Heart right ventricle (tissue), 16 donors: ENCODE measurements at regions of chr1 and their contacts with region 1.

Region 1: GRCh38 chr1:220032911-220033310 is 13.4 kb downstream of the EPRS1 start:
- DNase-seq: no peak
- ATAC-seq: no peak
- H3K4me3 ChIP-seq: no peak overlapping the region
- H3K27ac ChIP-seq: no peak overlapping the region
- H3K4me1 ChIP-seq: no peaks in the 10 kb centered on the region
- H3K27me3 ChIP-seq: no peaks in the 10 kb centered on the region
- CTCF ChIP-seq: no peak

Region 2: DNA sequence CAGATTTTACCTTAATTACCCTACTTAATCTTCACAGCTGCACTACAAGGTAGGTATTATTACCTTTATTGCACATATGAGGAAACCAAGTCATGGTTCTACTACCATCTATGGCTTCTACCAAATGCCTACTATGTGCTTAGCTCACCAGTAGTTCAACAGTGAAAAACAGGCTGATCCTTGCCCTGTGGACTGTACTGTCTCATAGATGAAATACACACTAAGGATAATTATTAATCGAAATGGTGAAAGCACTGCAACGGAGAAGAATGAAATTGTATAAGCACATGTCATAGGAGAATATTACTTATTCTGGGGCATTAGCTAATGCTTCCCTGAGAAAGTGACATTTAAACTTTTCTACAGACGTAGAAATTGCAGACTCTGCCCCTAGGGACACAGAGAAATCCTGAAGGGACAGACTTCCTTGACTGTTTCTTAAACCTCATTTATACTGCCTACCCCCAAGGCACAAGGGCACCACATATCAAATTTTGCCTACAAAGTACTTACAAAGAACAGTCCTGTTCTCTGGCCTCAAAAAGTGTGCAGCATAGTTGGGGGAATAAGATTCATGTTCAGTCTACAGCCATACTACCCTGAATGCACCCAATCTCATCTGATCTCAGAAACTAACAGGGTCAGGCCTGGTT is 271.6 kb before region 1 on chr1:
- intact Hi-C with region 1: no loop called
- DNase-seq: no peak
- ATAC-seq: no peak
- H3K4me3 ChIP-seq: no peak overlapping the region
- H3K27ac ChIP-seq: no peak overlapping the region
- H3K4me1 ChIP-seq: peaks cover 0 to 14% (median 10%) of the 10 kb centered on the region in 9 donors
- H3K27me3 ChIP-seq: no peaks in the 10 kb centered on the region
- CTCF ChIP-seq: no peak

Region 3: GRCh38 chr1:219993554-219994433 is 39.1 kb before region 1 on chr1:
- intact Hi-C with region 1: no loop called
- DNase-seq: no peak
- ATAC-seq: no peak
- H3K4me3 ChIP-seq: no peak overlapping the region
- H3K27ac ChIP-seq: no peak overlapping the region
- H3K4me1 ChIP-seq: peaks cover 0 to 4% (median 0%) of the 10 kb centered on the region in 9 donors
- H3K27me3 ChIP-seq: no peaks in the 10 kb centered on the region
- CTCF ChIP-seq: no peak

Region 4: DNA sequence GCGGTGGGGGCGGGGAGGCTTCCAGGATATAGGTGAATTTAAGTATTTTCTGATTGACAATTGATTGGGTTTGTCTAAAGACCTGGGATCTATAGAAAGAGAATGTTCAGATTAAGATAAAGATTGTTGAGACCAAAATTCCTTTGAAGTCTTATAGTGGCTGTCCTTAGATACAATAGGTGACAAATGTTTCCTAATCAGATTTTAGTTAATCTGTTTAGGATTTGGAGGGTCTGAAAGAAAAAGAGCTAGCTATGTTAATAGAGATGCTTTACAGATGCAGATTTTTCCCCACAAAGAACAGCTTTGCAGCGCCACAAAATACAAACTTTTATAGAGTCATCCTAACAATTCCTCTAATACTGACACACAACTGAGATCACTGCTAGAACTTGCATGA is 28.0 kb after region 1 on chr1:
- intact Hi-C with region 1: loop called in 1 of 10 experiments (anchors 1 kb)
- DNase-seq: no peak
- ATAC-seq: no peak
- H3K4me3 ChIP-seq: no peak overlapping the region
- H3K27ac ChIP-seq: no peak overlapping the region
- H3K4me1 ChIP-seq: no peaks in the 10 kb centered on the region
- H3K27me3 ChIP-seq: no peaks in the 10 kb centered on the region
- CTCF ChIP-seq: no peak